H1 (cell line): ENCODE measurements at regions of chr7 and their contacts with region 1.

Region 1: GRCh38 chr7:43260980-43261878 is 148.8 kb downstream of the HECW1 start:
- DNase-seq: peak; percentile 72 to 87
- H3K4me3 ChIP-seq: no peak overlapping the region
- H3K27ac ChIP-seq: no peak overlapping the region
- H3K4me1 ChIP-seq: no peaks in the 10 kb centered on the region; a peak in 1 of 7 replicates
- H3K27me3 ChIP-seq: no peaks in the 10 kb centered on the region
- CTCF ChIP-seq: peak; percentile 70 to 96 (median 88)
- EP300 ChIP-seq: no peak
- POLR2A ChIP-seq: no peak
- RAD21 ChIP-seq: peak; percentile 95 to 96

Region 2: GRCh38 chr7:42940985-42941847 is 320.0 kb before region 1 on chr7:
- CTCF ChIA-PET with region 1: interaction called, 20 read pairs
- POLR2A ChIA-PET with region 1: no interaction called
- DNase-seq: peak; percentile 65 to 92
- H3K4me3 ChIP-seq: no peak overlapping the region
- H3K27ac ChIP-seq: no peak overlapping the region
- H3K4me1 ChIP-seq: no peaks in the 10 kb centered on the region; a peak in 1 of 7 replicates
- H3K27me3 ChIP-seq: no peaks in the 10 kb centered on the region
- CTCF ChIP-seq: peak; percentile 2 to 91 (median 82)
- EP300 ChIP-seq: no peak
- POLR2A ChIP-seq: 0 out of 3 replicates have a peak, but pooled peaks of 1 of the 2 experiments have one; percentile 25
- RAD21 ChIP-seq: peak; percentile 96

Region 3: GRCh38 chr7:43108255-43109011 is 152.8 kb before region 1 on chr7:
- CTCF ChIA-PET with region 1: interaction called, 12 read pairs
- POLR2A ChIA-PET with region 1: interaction called, 7 read pairs
- DNase-seq: peak in 1 of 2 experiments; percentile 98
- H3K4me3 ChIP-seq: peak overlapping the region in 2 of 4 experiments; percentile 26 to 44; a peak in 2 of 8 replicates
- H3K27ac ChIP-seq: peak overlapping the region; percentile 80; the same call in 1 of the 2 replicates
- H3K4me1 ChIP-seq: peaks cover 0 to 17% (median 2%) of the 10 kb centered on the region in 4 experiments; a peak in 5 of 7 replicates
- H3K27me3 ChIP-seq: peaks cover 0 to 7% (median 3%) of the 10 kb centered on the region in 4 experiments; a peak in 2 of 7 replicates
- CTCF ChIP-seq: peak; percentile 80 to 97 (median 91)
- EP300 ChIP-seq: no peak
- POLR2A ChIP-seq: peak in 1 of 2 experiments; percentile 49; a peak in 1 of 3 replicates
- RAD21 ChIP-seq: peak; percentile 78 to 85

Region 4: GRCh38 chr7:43211276-43211675 is 50.0 kb before region 1 on chr7:
- CTCF ChIA-PET with region 1: interaction called, 15 read pairs
- POLR2A ChIA-PET with region 1: no interaction called
- DNase-seq: no peak
- H3K4me3 ChIP-seq: no peak overlapping the region
- H3K27ac ChIP-seq: no peak overlapping the region
- H3K4me1 ChIP-seq: peaks cover 8 to 18% (median 17%) of the 10 kb centered on the region in 4 experiments; a peak in 6 of 7 replicates
- H3K27me3 ChIP-seq: no peaks in the 10 kb centered on the region
- CTCF ChIP-seq: peak; percentile 55 to 62 (median 57)
- EP300 ChIP-seq: no peak
- POLR2A ChIP-seq: no peak
- RAD21 ChIP-seq: peak; percentile 48 to 67; a peak in 3 of 4 replicates

Region 5: DNA sequence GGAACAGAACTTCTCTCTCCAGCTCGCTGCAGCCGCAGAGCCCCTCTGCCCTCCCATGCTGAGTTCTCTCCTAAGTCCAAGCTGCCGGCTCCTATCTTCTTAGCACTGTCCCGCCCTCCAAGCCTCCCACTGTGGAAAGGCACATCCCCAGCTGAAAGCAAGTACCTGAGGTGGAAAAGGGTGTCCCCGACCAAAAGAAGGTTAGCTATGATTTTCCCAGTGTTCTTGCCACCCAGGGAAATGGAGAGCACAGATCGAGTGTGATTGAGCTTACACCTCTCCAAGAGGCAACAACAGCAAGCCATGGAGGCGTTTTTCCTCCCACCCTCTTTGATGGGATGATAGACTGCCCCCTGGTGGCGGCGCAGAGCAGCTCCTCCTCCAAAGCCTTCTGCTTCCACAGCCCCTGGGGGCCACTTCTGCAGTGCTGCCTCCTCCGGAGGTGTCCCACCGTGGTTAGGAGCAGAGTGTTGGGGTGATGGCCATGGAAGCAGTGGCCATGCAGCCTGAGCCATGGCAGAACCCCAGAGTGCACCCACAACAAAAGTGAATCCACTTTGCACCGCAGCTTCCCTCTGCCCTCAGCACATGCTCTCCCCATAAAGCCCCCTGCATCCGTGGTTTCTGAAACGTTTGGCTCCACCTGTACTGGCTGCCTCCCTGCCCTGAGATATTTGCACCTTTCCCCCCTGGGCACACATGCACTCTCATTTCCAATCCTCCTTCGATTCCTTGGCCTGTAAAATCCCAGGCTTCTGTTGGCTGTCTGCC is 178.6 kb after region 1 on chr7:
- CTCF ChIA-PET with region 1: interaction called, 19 read pairs
- POLR2A ChIA-PET with region 1: no interaction called
- DNase-seq: peak; percentile 77 to 85
- H3K4me3 ChIP-seq: no peak overlapping the region
- H3K27ac ChIP-seq: no peak overlapping the region
- H3K4me1 ChIP-seq: peaks cover 0 to 3% (median 1%) of the 10 kb centered on the region in 4 experiments; a peak in 2 of 7 replicates
- H3K27me3 ChIP-seq: no peaks in the 10 kb centered on the region
- CTCF ChIP-seq: peak; percentile 91 to 95 (median 91)
- EP300 ChIP-seq: no peak
- POLR2A ChIP-seq: no peak
- RAD21 ChIP-seq: peak; percentile 85 to 90